ENCODE measurements at regions of chr15 and their contacts with region 1.

Region 1: DNA sequence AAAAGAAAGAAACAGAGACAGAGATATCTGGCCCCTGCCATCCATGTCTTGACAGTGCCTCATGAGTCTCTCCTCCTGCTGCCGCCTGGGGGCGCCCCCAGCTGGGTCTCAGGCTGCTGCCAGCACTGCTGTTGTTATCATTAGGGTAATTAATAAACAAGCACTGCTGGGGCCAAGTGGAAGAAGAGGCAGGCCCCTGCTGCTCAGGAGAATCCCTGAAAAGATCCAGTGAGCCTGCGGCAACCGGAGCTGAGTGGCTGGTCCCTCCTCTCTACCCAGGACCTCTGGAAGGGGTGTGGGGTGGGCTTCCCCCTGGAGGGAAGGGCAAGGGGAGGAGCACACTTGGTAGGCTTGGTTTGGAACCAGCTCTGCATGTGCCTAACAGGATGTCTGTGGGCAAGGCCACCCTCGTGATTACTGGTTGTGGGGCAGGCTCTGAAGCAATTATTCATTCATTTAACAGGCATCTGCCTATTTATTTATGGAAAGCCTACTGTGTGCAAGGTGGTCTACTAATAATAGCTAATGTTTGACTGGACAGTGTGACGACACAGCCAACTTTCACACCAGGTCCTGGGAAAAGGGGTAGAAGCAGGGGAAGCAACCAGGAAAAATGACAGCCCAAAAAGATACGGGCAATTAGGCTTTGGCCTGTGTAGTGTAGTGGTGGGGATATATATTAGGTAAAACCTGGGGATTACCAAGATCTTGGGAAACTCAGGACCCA is 1.2 kb upstream of the TYRO3 start:
- DNase-seq: peak; percentile 58 to 83 (median 78)
- ATAC-seq: peak; percentile 87
- H3K4me3 ChIP-seq: no peak overlapping the region
- H3K4me3 Mint-ChIP-seq: peak overlapping the region; percentile 86 to 93 (median 89)
- H3K27ac ChIP-seq: no peak overlapping the region
- H3K27ac Mint-ChIP-seq: peak overlapping the region; percentile 53 to 95 (median 79)
- H3K4me1 ChIP-seq: peaks cover 15 to 19% of the 10 kb centered on the region in 2 donors
- H3K4me1 Mint-ChIP-seq: peaks cover 14 to 24% (median 20%) of the 10 kb centered on the region in 7 donors
- H3K27me3 ChIP-seq: peaks cover 3 to 6% of the 10 kb centered on the region in 2 donors
- H3K27me3 Mint-ChIP-seq: peaks cover 0 to 49% (median 19%) of the 10 kb centered on the region in 5 donors

Region 2: GRCh38 chr15:41331833-41332787 is 225.7 kb before region 1 on chr15 and contains the start of gene OIP5:
- CTCF ChIA-PET with region 1: no interaction called
- POLR2A ChIA-PET with region 1: no interaction called
- intact Hi-C with region 1: loop called in 1 of 2 experiments (anchors 5 kb)
- DNase-seq: peak; percentile 83 to 99 (median 97)
- ATAC-seq: peak; percentile 98
- H3K4me3 ChIP-seq: peak within 1 kb of the TSS; percentile 95
- H3K4me3 Mint-ChIP-seq: peak within 1 kb of the TSS; percentile 87 to 100 (median 97)
- H3K27ac ChIP-seq: peak within 1 kb of the TSS; percentile 52
- H3K27ac Mint-ChIP-seq: peak within 1 kb of the TSS; percentile 77 to 97 (median 91)
- H3K4me1 ChIP-seq: peaks cover 9 to 13% of the 10 kb centered on the region in 2 donors
- H3K4me1 Mint-ChIP-seq: peaks cover 12 to 32% (median 29%) of the 10 kb centered on the region in 7 donors
- H3K27me3 ChIP-seq: no peaks in the 10 kb centered on the region
- H3K27me3 Mint-ChIP-seq: no peaks in the 10 kb centered on the region
- total RNA-seq, gene OIP5: 0.32 to 15.2 (median 0.54) TPM in 4 of 5 experiments, not detected in the other

Region 3: DNA sequence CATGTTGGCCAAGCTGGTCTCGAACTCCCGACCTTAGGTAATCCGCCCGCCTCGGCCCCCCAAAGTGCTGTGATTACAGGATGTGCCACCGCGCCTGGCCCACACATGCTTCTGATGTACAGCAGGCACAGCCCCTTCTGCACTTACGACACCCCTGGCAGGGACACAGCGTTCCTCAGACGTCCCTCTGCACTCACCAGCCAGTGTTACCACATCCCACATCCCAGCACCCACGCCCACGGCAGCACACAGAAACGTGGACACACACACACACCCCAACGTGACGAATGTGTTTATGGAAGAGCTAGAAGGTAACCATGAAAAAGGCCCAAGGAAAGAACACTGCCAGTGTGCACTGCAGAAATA is 13.2 kb before region 1 on chr15:
- CTCF ChIA-PET with region 1: no interaction called
- POLR2A ChIA-PET with region 1: interaction called, 10 read pairs
- intact Hi-C with region 1: loop called (anchors 1 to 2 kb)
- DNase-seq: peak in 1 of 9 donors; percentile 1
- ATAC-seq: no peak
- H3K4me3 ChIP-seq: peak overlapping the region; percentile 96
- H3K4me3 Mint-ChIP-seq: peak overlapping the region; percentile 92 to 96 (median 94)
- H3K27ac ChIP-seq: peak overlapping the region; percentile 94
- H3K27ac Mint-ChIP-seq: peak overlapping the region in 8 of 9 donors; percentile 62 to 95 (median 92)
- H3K4me1 ChIP-seq: peaks cover 0 to 6% of the 10 kb centered on the region in 2 donors
- H3K4me1 Mint-ChIP-seq: peaks cover 0 to 31% (median 19%) of the 10 kb centered on the region in 7 donors
- H3K27me3 ChIP-seq: no peaks in the 10 kb centered on the region
- H3K27me3 Mint-ChIP-seq: peaks cover 0 to 4% (median 0%) of the 10 kb centered on the region in 5 donors

Region 4: DNA sequence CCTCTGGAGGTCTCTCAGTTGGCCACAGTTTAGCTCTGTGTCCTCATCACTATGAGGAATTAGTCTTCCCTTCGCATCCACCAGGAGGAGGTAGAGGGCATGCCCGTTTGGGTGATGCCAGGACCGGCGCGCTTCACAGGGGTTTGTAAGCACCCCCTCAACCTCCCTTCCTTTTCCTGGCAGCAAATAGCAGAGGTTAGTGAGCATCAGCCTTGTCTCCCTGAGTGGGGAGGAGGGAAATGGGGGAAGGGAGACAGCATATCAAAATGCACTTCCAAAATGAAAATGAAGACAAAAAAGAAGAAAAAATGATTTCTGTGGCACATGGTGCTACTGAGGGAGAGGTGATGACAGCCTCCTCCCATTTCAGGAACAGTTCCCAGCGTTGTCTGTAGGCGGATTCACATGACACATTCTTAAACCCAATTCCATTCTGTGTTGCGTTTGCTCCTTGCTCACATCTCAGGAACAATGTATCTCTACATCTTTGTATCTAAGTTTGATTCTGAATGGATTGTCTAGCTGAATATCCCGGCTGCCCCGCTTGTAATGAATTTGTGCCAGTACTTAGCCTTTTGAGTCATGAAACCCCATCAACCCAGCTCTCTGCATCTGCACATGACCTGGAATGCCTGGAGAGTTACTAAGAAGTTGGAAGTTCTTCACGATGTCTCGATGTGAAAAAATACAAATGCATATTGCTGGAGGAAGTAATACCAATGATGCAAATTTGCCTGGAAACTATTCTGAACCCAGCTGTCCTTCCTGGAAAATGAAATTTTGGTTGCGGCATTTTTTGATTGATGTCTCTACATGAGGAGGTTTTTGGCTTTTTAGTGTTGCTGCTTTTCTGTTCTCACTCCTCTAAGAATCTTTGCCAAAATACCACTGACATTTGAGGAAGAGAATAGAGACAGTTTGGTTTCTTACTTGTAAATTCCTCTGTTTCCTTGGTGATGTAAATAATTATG is 46.4 kb after region 1 on chr15:
- CTCF ChIA-PET with region 1: interaction called, 3 read pairs
- POLR2A ChIA-PET with region 1: no interaction called
- intact Hi-C with region 1: loop called (anchors 1 to 5 kb)
- DNase-seq: peak; percentile 19 to 62 (median 50)
- ATAC-seq: peak; percentile 93
- H3K4me3 ChIP-seq: no peak overlapping the region
- H3K4me3 Mint-ChIP-seq: peak overlapping the region in 9 of 10 donors; percentile 17 to 81 (median 73)
- H3K27ac ChIP-seq: no peak overlapping the region
- H3K27ac Mint-ChIP-seq: peak overlapping the region in 1 of 9 donors; percentile 74
- H3K4me1 ChIP-seq: peaks cover 0 to 5% of the 10 kb centered on the region in 2 donors
- H3K4me1 Mint-ChIP-seq: peaks cover 3 to 10% (median 7%) of the 10 kb centered on the region in 7 donors
- H3K27me3 ChIP-seq: no peaks in the 10 kb centered on the region
- H3K27me3 Mint-ChIP-seq: peaks cover 0 to 43% (median 9%) of the 10 kb centered on the region in 5 donors

Region 5: DNA sequence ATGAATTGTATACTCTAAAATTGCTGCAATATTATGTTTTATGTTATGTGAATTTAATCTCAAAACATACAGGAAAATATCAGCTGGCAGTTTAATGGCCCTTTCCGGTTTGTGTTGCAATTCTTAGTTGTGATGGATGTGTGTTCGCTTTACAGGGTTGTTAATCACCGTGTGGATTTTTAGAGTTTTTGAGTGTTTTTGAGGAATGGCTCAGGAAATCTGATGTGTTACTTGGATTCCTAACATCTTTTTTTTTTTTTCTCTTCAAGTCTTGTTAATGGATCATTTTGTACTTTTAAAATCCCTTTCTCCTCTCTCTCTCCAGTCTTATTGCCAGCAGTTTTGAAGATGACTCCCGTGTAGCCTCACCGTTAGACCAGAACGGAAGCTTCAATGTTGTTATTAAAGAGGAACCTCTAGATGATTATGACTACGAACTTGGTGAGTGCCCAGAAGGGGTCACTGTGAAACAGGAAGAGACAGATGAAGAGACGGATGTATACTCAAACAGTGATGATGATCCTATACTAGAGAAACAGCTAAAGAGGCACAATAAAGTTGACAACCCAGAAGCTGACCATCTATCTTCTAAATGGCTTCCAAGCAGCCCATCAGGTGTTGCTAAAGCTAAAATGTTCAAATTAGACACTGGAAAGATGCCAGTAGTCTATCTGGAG is 138.1 kb after region 1 on chr15:
- CTCF ChIA-PET with region 1: no interaction called
- POLR2A ChIA-PET with region 1: no interaction called
- intact Hi-C with region 1: loop called in 1 of 2 experiments (anchors 2 kb)
- DNase-seq: peak in 7 of 9 donors; percentile 22 to 56 (median 44)
- ATAC-seq: peak; percentile 97
- H3K4me3 ChIP-seq: no peak overlapping the region
- H3K4me3 Mint-ChIP-seq: peak overlapping the region; percentile 3 to 69 (median 56)
- H3K27ac ChIP-seq: peak overlapping the region; percentile 42
- H3K27ac Mint-ChIP-seq: peak overlapping the region; percentile 22 to 81 (median 67)
- H3K4me1 ChIP-seq: peaks cover 0 to 10% of the 10 kb centered on the region in 2 donors
- H3K4me1 Mint-ChIP-seq: peaks cover 25 to 74% (median 59%) of the 10 kb centered on the region in 7 donors
- H3K27me3 ChIP-seq: no peaks in the 10 kb centered on the region
- H3K27me3 Mint-ChIP-seq: no peaks in the 10 kb centered on the region

Region 6: GRCh38 chr15:41827880-41828806 is 270.3 kb after region 1 on chr15 and contains the start of gene JMJD7:
- CTCF ChIA-PET with region 1: no interaction called
- POLR2A ChIA-PET with region 1: no interaction called
- intact Hi-C with region 1: loop called in 1 of 2 experiments (anchors 1 kb)
- DNase-seq: peak; percentile 81 to 98 (median 91)
- ATAC-seq: peak; percentile 99
- H3K4me3 ChIP-seq: peak within 1 kb of the TSS; percentile 99
- H3K4me3 Mint-ChIP-seq: peak within 1 kb of the TSS; percentile 86 to 99 (median 96)
- H3K27ac ChIP-seq: peak within 1 kb of the TSS; percentile 94
- H3K27ac Mint-ChIP-seq: peak within 1 kb of the TSS; percentile 78 to 96 (median 92)
- H3K4me1 ChIP-seq: peaks cover 26 to 38% of the 10 kb centered on the region in 2 donors
- H3K4me1 Mint-ChIP-seq: peaks cover 34 to 53% (median 50%) of the 10 kb centered on the region in 7 donors
- H3K27me3 ChIP-seq: no peaks in the 10 kb centered on the region
- H3K27me3 Mint-ChIP-seq: peaks cover 0 to 3% (median 0%) of the 10 kb centered on the region in 5 donors
- total RNA-seq, gene JMJD7: 25.3 to 83.7 (median 52.1) TPM

Region 7: DNA sequence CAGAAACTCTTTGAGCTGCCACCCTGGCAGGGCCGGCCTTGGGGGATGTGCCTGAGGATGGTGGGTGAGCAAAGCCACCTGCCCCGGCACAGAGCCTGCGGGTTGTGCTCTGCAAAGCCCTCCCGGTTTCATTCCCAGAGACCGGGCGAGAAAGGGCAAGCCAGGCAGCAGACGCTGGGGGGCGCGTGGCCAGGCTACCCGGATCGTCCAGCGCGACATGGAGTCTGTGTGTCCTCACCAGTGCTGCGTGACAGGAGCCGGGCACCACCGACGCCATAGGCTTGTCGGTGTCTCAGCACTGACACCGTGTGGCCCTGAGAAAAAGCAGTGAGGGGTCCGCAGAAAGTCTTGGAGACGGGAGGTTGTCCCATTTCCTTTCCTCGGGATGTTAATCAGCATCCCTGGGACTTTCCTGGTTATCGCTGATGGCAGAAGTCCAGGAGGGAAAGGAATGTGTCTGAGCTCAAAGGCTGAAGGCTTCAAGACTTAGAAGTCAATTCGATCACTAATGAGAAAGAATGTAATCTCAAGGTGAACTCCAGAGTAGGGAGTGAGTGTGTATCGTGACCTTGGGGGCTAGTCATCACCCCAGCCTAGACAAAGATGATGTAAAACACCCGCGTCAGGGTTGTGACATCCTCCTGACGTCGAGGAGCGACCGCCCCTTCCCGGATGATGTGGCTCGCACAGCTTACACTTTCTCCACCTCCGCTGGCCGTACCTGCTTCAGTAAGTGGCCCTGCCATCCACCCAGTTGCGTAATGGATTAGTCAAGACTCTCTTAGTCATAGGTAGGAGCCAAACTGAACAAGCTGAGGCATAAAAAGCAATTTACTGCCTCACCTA is 499.3 kb after region 1 on chr15:
- CTCF ChIA-PET with region 1: no interaction called
- POLR2A ChIA-PET with region 1: no interaction called
- intact Hi-C with region 1: loop called in 1 of 2 experiments (anchors 5 kb)
- DNase-seq: peak; percentile 19 to 56 (median 30)
- ATAC-seq: peak; percentile 81
- H3K4me3 ChIP-seq: peak overlapping the region; percentile 23
- H3K4me3 Mint-ChIP-seq: peak overlapping the region; percentile 39 to 79 (median 60)
- H3K27ac ChIP-seq: no peak overlapping the region
- H3K27ac Mint-ChIP-seq: peak overlapping the region in 4 of 9 donors; percentile 24 to 77 (median 35)
- H3K4me1 ChIP-seq: no peaks in the 10 kb centered on the region
- H3K4me1 Mint-ChIP-seq: peaks cover 3 to 17% (median 10%) of the 10 kb centered on the region in 7 donors
- H3K27me3 ChIP-seq: peaks cover 0 to 12% of the 10 kb centered on the region in 2 donors
- H3K27me3 Mint-ChIP-seq: peaks cover 11 to 59% (median 27%) of the 10 kb centered on the region in 5 donors

Measured in naive thymus-derived CD4-positive, alpha-beta T cell (primary cell).